ENCODE measurements at regions of chr11 and their contacts with region 1.

Region 1: DNA sequence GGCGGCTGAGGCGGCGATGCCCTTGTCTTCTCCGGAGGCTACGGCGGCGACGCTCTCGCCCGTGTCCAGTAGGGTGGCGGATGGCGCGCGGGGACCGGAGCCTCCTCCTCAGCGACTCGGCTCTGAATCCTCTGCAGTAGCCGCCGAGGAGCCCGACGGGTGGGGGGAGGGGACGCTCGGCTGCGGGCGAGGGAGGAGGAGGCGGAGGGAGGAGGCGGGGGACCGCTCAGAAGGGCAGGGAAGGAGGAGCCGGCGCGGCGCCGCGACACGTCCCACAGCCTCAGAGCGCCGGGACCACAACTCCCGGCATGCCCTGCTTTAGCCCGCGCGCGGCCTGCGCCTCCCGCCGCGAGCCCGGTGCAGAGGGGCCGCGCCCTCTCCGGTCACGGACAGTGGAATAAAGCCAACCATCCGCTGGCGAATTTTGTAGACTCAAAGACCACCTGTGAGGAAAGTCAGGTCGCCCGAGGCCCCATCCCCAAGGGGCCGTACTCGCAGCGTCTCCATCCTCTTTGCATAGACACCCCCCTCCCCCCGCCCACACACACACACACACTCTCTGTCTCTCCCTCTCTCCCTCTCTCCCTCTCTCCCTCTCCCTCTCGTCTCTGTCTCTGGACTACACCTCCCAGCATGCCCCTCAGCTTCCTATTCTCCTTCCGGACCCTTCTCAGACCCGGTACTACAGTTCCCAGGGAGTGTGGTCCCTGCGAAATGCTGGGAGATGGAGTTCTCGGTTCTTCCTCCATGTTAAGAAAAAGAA is at the start of gene FAM168A:
- DNase-seq: peak; percentile 82 to 92 (median 89)
- ATAC-seq: peak; percentile 96
- H3K4me3 ChIP-seq: peak within 1 kb of the TSS; percentile 71
- H3K4me3 Mint-ChIP-seq: peak within 1 kb of the TSS; percentile 90 to 97 (median 95)
- H3K27ac ChIP-seq: peak within 1 kb of the TSS; percentile 87
- H3K27ac Mint-ChIP-seq: peak within 1 kb of the TSS; percentile 91 to 97 (median 95)
- H3K4me1 ChIP-seq: peaks cover 12 to 13% of the 10 kb centered on the region in 2 donors
- H3K4me1 Mint-ChIP-seq: peaks cover 19 to 48% (median 46%) of the 10 kb centered on the region in 7 donors
- H3K27me3 ChIP-seq: no peaks in the 10 kb centered on the region
- H3K27me3 Mint-ChIP-seq: peaks cover 0 to 2% (median 0%) of the 10 kb centered on the region in 5 donors
- total RNA-seq, gene FAM168A: 18.4 to 33.0 (median 25.2) TPM

Region 2: GRCh38 chr11:71928737-71929452 is 1669.2 kb before region 1 on chr11 and contains the start of gene RNF121:
- CTCF ChIA-PET with region 1: no interaction called
- POLR2A ChIA-PET with region 1: interaction called, 4 read pairs
- intact Hi-C with region 1: loop called in 1 of 2 experiments (anchors 1 kb)
- DNase-seq: peak; percentile 91 to 99 (median 96)
- ATAC-seq: peak; percentile 97
- H3K4me3 ChIP-seq: peak within 1 kb of the TSS; percentile 97
- H3K4me3 Mint-ChIP-seq: peak within 1 kb of the TSS; percentile 92 to 100 (median 98)
- H3K27ac ChIP-seq: peak within 1 kb of the TSS; percentile 88
- H3K27ac Mint-ChIP-seq: peak within 1 kb of the TSS; percentile 94 to 100 (median 98)
- H3K4me1 ChIP-seq: peaks cover 17 to 22% of the 10 kb centered on the region in 2 donors
- H3K4me1 Mint-ChIP-seq: peaks cover 26 to 70% (median 60%) of the 10 kb centered on the region in 7 donors
- H3K27me3 ChIP-seq: no peaks in the 10 kb centered on the region
- H3K27me3 Mint-ChIP-seq: no peaks in the 10 kb centered on the region
- total RNA-seq, gene RNF121: 18.2 to 37.2 (median 29.2) TPM

Region 3: GRCh38 chr11:73141848-73142286 is 456.3 kb before region 1 on chr11:
- CTCF ChIA-PET with region 1: no interaction called
- POLR2A ChIA-PET with region 1: no interaction called
- intact Hi-C with region 1: loop called (anchors 2 to 5 kb)
- DNase-seq: peak in 4 of 9 donors; percentile 38 to 64 (median 50)
- ATAC-seq: peak; percentile 42
- H3K4me3 ChIP-seq: peak overlapping the region; percentile 87
- H3K4me3 Mint-ChIP-seq: peak overlapping the region; percentile 83 to 97 (median 94)
- H3K27ac ChIP-seq: peak overlapping the region; percentile 99
- H3K27ac Mint-ChIP-seq: peak overlapping the region; percentile 82 to 98 (median 91)
- H3K4me1 ChIP-seq: peaks cover 25 to 26% of the 10 kb centered on the region in 2 donors
- H3K4me1 Mint-ChIP-seq: peaks cover 22 to 58% (median 51%) of the 10 kb centered on the region in 7 donors
- H3K27me3 ChIP-seq: no peaks in the 10 kb centered on the region
- H3K27me3 Mint-ChIP-seq: no peaks in the 10 kb centered on the region

Region 4: DNA sequence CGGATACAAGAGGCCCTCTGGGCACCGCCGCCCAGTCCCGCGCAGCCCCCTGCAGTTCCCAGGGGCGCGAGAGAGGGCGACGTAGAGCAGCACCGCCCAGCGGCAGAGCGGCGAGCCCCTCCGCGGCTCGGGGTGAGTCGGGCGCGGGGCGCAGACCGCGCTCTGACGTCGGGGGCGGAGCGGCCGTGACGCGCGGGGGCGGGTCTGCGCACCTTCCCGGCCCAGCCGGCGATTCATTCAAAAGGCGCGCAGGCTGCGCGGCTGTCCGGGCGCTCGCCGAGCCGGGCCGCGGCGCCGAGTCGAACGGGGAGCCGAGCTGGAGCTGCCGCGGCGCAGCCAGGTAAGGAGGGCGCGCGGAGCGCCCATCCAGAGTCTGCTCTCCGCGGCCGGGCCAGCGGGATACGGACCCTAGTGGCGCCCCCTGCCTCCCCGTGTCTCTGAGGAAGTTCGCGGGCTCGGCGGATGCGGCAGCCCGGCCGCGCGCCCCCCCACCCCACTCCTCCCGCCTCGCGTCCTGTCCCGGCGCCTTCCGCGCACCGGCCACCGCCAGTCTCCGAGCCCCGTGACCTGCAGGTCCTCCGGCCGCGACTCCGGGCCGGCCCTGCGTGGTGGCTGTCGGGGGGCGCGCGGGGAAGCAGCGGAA is 221.9 kb before region 1 on chr11 and contains the start of gene RELT:
- CTCF ChIA-PET with region 1: no interaction called
- POLR2A ChIA-PET with region 1: no interaction called
- intact Hi-C with region 1: loop called (anchors 1 kb)
- DNase-seq: peak; percentile 84 to 99 (median 96)
- ATAC-seq: peak; percentile 93
- H3K4me3 ChIP-seq: peak within 1 kb of the TSS; percentile 84
- H3K4me3 Mint-ChIP-seq: peak within 1 kb of the TSS; percentile 86 to 99 (median 92)
- H3K27ac ChIP-seq: peak within 1 kb of the TSS; percentile 92
- H3K27ac Mint-ChIP-seq: peak within 1 kb of the TSS; percentile 87 to 99 (median 95)
- H3K4me1 ChIP-seq: peaks cover 12 to 22% of the 10 kb centered on the region in 2 donors
- H3K4me1 Mint-ChIP-seq: peaks cover 32 to 49% (median 41%) of the 10 kb centered on the region in 7 donors
- H3K27me3 ChIP-seq: no peaks in the 10 kb centered on the region
- H3K27me3 Mint-ChIP-seq: no peaks in the 10 kb centered on the region
- total RNA-seq, gene RELT: 11.9 to 275 (median 28.4) TPM

Region 5: GRCh38 chr11:73647459-73648100 is 49.4 kb after region 1 on chr11:
- CTCF ChIA-PET with region 1: no interaction called
- POLR2A ChIA-PET with region 1: interaction called, 9 read pairs
- intact Hi-C with region 1: loop called (anchors 1 kb)
- DNase-seq: peak; percentile 81 to 96 (median 94)
- ATAC-seq: peak; percentile 100
- H3K4me3 ChIP-seq: peak overlapping the region; percentile 62
- H3K4me3 Mint-ChIP-seq: peak overlapping the region; percentile 71 to 96 (median 92)
- H3K27ac ChIP-seq: peak overlapping the region; percentile 71
- H3K27ac Mint-ChIP-seq: peak overlapping the region; percentile 83 to 98 (median 94)
- H3K4me1 ChIP-seq: peaks cover 7 to 15% of the 10 kb centered on the region in 2 donors
- H3K4me1 Mint-ChIP-seq: peaks cover 10 to 41% (median 34%) of the 10 kb centered on the region in 7 donors
- H3K27me3 ChIP-seq: no peaks in the 10 kb centered on the region
- H3K27me3 Mint-ChIP-seq: peaks cover 0 to 8% (median 0%) of the 10 kb centered on the region in 5 donors

Region 6: DNA sequence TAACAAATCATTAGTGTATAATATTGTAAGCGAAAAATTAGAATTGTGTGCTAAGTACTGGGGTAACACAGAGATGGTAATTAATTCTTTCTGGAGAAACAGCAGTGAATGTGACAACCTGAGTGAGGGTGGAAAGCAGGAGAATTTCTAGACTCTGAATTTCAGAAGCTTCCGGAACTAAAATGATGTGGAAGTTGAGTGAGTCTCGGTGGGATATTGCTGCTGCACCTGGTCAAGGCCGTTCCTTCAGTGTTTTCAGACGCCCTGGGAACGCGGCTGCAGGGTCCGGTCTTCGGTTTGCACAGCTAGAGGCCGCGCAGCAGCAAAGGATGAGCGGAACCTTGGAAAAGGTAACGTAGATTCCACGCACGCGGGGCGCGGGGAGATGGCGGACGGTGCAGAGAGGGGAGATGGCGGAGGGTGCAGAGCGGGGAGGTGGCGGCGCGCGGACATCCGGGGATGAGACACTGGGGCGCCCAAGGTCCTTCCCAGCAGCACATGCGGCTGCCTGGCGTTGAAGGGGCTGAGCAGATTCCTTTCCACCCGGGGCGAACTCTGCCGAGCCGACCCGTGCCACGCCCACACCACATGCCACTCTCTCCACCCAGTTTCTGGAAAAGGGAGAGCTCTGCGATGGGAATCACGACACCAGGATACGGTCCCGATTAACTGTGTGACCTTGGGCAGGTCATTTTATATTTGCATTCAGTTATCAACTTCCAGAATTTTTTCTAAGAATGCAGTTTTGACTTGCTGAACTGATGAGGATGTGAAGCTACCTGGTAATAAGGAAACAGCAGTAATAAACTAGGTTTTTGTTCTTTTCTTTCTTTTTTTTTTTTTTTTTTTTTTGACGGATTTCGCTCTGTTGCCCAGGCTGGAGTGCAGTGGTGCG is 189.8 kb after region 1 on chr11 and contains the start of gene MRPL48:
- CTCF ChIA-PET with region 1: no interaction called
- POLR2A ChIA-PET with region 1: no interaction called
- intact Hi-C with region 1: loop called in 1 of 2 experiments (anchors 1 kb)
- DNase-seq: peak; percentile 74 to 90 (median 86)
- ATAC-seq: peak; percentile 100
- H3K4me3 ChIP-seq: peak within 1 kb of the TSS; percentile 94
- H3K4me3 Mint-ChIP-seq: peak within 1 kb of the TSS; percentile 92 to 100 (median 98)
- H3K27ac ChIP-seq: peak within 1 kb of the TSS; percentile 81
- H3K27ac Mint-ChIP-seq: peak within 1 kb of the TSS; percentile 93 to 100 (median 99)
- H3K4me1 ChIP-seq: peaks cover 10 to 13% of the 10 kb centered on the region in 2 donors
- H3K4me1 Mint-ChIP-seq: peaks cover 7 to 43% (median 30%) of the 10 kb centered on the region in 7 donors
- H3K27me3 ChIP-seq: no peaks in the 10 kb centered on the region
- H3K27me3 Mint-ChIP-seq: no peaks in the 10 kb centered on the region
- total RNA-seq, gene MRPL48: 20.3 to 50.6 (median 25.5) TPM

Measured in naive thymus-derived CD4-positive, alpha-beta T cell (primary cell).